ENCODE measurements at regions of chr12 and their contacts with region 1.

Region 1: DNA sequence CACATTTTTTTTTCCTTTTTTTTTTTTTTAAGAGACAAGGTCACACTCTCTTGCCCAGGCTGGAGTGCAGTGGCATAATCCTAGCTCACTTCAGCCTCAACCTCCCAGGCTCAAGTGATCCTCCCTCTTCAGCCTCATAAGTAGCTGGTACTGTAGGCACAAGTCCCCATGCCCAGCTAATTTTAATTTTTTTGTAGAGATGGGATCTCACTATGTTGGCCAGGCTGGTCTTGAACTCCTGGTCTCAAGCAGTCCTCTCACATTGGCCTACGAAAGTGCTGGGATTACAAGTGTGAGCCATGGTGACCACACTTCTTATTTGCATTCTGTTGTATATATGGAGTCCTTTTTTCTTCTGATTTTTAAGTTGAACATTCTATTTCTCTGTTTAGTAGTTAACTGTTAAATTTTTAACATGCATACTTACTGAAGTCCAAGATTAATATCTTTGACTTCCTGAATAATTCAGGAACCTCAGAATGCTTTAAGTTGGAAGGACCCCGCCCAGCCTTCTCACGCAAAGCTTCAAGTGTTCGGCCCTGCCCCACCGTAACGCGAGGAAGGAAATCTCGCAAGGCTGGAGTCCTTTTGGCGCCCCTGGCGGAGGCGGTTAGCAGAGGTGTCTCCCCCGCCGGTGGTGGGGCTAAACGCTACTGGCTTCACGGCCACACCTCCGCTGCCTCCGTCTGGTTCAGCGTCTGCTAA is 21.6 kb downstream of the SPATS2 start:
- DNase-seq: peak; percentile 38 to 73 (median 49)
- H3K4me3 ChIP-seq: no peak overlapping the region
- H3K4me3 Mint-ChIP-seq: peak overlapping the region in 6 of 7 donors; percentile 11 to 73 (median 56)
- H3K27ac ChIP-seq: no peak overlapping the region
- H3K27ac Mint-ChIP-seq: peak overlapping the region in 1 of 8 donors; percentile 54
- H3K4me1 ChIP-seq: no peaks in the 10 kb centered on the region
- H3K4me1 Mint-ChIP-seq: peaks cover 4 to 7% (median 4%) of the 10 kb centered on the region in 3 donors
- H3K27me3 ChIP-seq: no peaks in the 10 kb centered on the region
- H3K27me3 Mint-ChIP-seq: peaks cover 0 to 2% of the 10 kb centered on the region in 2 donors

Region 2: DNA sequence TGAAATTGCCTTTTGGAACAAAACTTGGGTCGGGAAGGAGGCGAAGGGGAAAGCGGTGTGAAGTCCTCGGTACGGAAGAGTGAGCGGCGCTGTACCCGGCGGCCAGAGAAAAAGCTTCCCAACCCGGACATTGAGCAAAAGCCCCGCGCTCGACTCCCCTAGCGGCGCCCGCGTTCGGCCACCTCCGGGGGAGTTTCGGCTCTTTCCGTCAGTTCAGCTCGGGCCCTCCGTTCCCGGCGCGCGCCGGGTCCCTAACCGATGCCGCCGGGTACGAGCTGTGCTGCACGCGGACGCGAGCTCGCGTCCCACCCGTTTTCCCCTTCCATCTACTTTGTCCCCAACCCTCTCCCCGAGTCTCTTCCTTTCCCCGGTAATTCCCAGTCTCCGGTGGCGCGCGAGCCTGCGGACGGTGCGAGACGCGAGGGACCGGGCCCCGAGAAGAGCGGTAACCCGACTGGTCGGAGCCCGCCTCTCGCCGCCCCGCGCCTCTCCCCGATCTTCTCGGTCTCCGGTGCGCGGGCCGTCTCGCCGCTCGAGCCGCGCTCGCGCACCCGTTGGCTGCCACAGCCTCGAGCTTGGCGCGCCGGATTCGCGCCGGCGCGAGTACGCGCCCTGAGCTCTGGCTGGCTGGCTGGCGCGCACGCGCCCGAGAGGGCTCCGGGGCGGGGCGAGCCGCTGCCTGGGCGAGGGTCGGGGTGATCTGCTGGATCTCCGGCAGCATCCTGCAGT is 22.0 kb before region 1 on chr12:
- CTCF ChIA-PET with region 1: interaction called, 15 read pairs
- POLR2A ChIA-PET with region 1: no interaction called
- DNase-seq: peak; percentile 76 to 89 (median 79)
- H3K4me3 ChIP-seq: peak overlapping the region; percentile 82
- H3K4me3 Mint-ChIP-seq: peak overlapping the region; percentile 89 to 98 (median 96)
- H3K27ac ChIP-seq: peak overlapping the region; percentile 91
- H3K27ac Mint-ChIP-seq: peak overlapping the region; percentile 60 to 98 (median 94)
- H3K4me1 ChIP-seq: peaks cover 20% of the 10 kb centered on the region
- H3K4me1 Mint-ChIP-seq: peaks cover 19 to 43% (median 37%) of the 10 kb centered on the region in 3 donors
- H3K27me3 ChIP-seq: no peaks in the 10 kb centered on the region
- H3K27me3 Mint-ChIP-seq: peaks cover 0 to 4% of the 10 kb centered on the region in 2 donors

Measured in CD8-positive, alpha-beta memory T cell (primary cell).